T-cell (primary cell): ENCODE measurements at regions of chr17 and their contacts with region 1.

Region 1: DNA sequence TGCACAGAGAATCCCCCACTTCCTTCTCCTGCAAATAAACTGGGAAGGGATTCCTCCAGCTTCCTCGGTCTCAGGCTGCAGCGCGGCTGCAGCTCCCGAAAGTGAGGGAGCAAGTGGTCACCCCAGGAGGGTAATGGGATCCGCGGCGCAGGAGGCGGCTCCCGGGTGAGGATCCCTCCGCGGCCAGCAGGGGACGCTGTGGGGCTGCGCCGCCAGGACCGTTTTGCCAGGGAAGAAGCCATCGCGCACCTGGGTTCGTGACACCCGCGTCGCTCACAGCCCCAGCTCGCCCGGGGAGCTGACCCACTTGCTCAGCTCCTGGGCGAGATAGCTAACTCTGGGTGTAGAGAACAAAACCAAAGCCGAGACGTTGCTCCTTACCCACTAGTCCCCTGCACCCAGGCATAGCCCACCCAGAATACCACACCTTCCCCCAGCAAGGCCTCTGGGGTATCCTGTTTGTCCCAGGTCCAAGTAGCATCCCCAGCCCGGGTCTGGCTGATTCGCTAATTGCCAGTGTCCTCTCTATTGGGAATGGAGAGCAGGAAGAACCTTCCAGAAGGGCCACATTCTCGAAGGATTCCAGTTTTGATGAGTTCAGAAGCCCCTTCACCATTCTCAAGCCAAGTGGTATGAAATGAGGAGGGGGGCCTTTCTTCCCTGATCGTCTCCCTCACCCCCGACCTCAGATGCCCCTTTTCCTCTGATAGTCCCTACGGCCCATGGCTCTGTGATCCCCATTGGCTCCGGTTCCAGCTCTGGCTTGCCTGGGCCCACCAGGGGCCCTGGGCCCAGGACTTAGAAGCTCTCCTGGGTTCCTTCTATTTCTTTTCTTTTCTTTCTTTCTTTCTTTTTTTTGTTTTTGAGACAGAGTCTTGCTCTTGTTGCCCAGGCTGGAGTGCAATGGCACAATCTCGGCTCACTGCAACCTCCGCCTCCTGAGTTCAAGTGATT is 14.1 kb downstream of the CYGB start:
- DNase-seq: peak; percentile 44 to 92 (median 77)
- ATAC-seq: peak; percentile 74 to 85 (median 82)
- H3K4me3 ChIP-seq: no peak overlapping the region
- H3K4me3 Mint-ChIP-seq: peak overlapping the region; percentile 36 to 59 (median 43)
- H3K27ac ChIP-seq: no peak overlapping the region
- H3K27ac Mint-ChIP-seq: peak overlapping the region; percentile 87 to 88
- H3K4me1 ChIP-seq: peaks cover 2 to 38% of the 10 kb centered on the region in 2 experiments
- H3K4me1 Mint-ChIP-seq: peaks cover 22 to 44% (median 35%) of the 10 kb centered on the region in 3 donors
- H3K27me3 ChIP-seq: peaks cover 0 to 12% of the 10 kb centered on the region in 2 experiments
- H3K27me3 Mint-ChIP-seq: no peaks in the 10 kb centered on the region

Region 2: DNA sequence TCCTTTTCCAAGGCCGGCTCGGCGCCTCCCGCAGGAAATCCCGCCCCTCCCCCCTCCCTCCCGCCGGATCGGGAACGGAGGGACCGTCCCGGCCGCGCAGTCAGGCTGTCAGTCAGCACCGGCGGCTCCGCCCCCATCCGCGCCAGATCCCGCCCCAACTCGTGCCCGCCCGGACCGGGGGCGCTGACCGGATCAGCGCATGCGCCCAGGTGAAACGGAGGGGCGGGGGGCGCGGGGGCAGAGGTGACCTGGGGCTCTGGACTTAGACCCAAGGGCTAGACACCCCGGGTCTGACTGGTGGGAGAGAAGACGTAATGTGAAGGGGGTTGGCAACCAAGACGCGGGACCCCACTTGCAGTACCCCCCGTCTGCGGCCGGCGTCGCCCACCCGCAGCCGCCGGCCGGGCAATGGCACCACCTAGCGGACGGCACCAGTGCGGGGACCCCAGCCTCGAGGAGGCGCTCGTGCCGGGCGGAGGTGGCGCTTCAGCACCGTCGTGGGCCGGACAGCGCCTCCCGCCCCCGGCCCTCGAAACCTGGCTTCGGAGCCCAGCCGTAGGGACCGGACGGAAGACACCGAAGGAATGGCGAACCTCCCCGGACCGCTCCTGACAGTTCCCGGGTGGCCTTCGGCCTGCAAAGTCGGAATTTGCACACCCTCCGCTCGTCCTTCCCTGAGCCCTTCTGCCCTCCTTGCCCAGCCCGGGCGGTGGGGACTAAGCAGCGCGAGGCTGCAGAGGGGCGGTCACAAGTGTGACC is 1007.7 kb before region 1 on chr17 and contains the start of gene CASKIN2:
- CTCF ChIA-PET with region 1: no interaction called
- POLR2A ChIA-PET with region 1: interaction called in 1 of 2 experiments, 11 read pairs
- DNase-seq: peak; percentile 36 to 87 (median 66)
- ATAC-seq: peak; percentile 51 to 68 (median 60)
- H3K4me3 ChIP-seq: peak within 1 kb of the TSS; percentile 53 to 55
- H3K4me3 Mint-ChIP-seq: peak within 1 kb of the TSS; percentile 71 to 77 (median 75)
- H3K27ac ChIP-seq: no peak within 1 kb of the TSS
- H3K27ac Mint-ChIP-seq: peak within 1 kb of the TSS in 1 of 2 donors; percentile 15
- H3K4me1 ChIP-seq: peaks cover 21 to 47% of the 10 kb centered on the region in 2 experiments
- H3K4me1 Mint-ChIP-seq: peaks cover 21 to 28% (median 24%) of the 10 kb centered on the region in 3 donors
- H3K27me3 ChIP-seq: peaks cover 0 to 21% of the 10 kb centered on the region in 2 experiments
- H3K27me3 Mint-ChIP-seq: no peaks in the 10 kb centered on the region
- total RNA-seq, gene CASKIN2: 0.28 to 0.88 (median 0.85) TPM

Region 3: GRCh38 chr17:76252040-76252954 is 271.1 kb before region 1 on chr17:
- CTCF ChIA-PET with region 1: no interaction called
- POLR2A ChIA-PET with region 1: no interaction called
- DNase-seq: peak in 7 of 35 experiments; percentile 18 to 63 (median 46)
- ATAC-seq: peak; percentile 72 to 93 (median 90)
- H3K4me3 ChIP-seq: peak overlapping the region; percentile 18 to 29
- H3K4me3 Mint-ChIP-seq: peak overlapping the region; percentile 65 to 75 (median 71)
- H3K27ac ChIP-seq: peak overlapping the region; percentile 68
- H3K27ac Mint-ChIP-seq: peak overlapping the region; percentile 95 to 97
- H3K4me1 ChIP-seq: peaks cover 33 to 51% of the 10 kb centered on the region in 2 experiments
- H3K4me1 Mint-ChIP-seq: peaks cover 62 to 66% (median 63%) of the 10 kb centered on the region in 3 donors
- H3K27me3 ChIP-seq: no peaks in the 10 kb centered on the region
- H3K27me3 Mint-ChIP-seq: no peaks in the 10 kb centered on the region

Region 4: GRCh38 chr17:76492989-76493501 is 30.3 kb before region 1 on chr17:
- CTCF ChIA-PET with region 1: no interaction called
- POLR2A ChIA-PET with region 1: no interaction called
- DNase-seq: peak in 15 of 35 experiments; percentile 14 to 61 (median 25)
- ATAC-seq: peak; percentile 45 to 56 (median 51)
- H3K4me3 ChIP-seq: peak overlapping the region; percentile 10 to 33
- H3K4me3 Mint-ChIP-seq: peak overlapping the region; percentile 63 to 83 (median 83)
- H3K27ac ChIP-seq: peak overlapping the region; percentile 66
- H3K27ac Mint-ChIP-seq: peak overlapping the region; percentile 82 to 91
- H3K4me1 ChIP-seq: peaks cover 11 to 85% of the 10 kb centered on the region in 2 experiments
- H3K4me1 Mint-ChIP-seq: peaks cover 34 to 74% (median 52%) of the 10 kb centered on the region in 3 donors
- H3K27me3 ChIP-seq: no peaks in the 10 kb centered on the region
- H3K27me3 Mint-ChIP-seq: no peaks in the 10 kb centered on the region

Region 5: GRCh38 chr17:76547184-76547641 is 23.9 kb after region 1 on chr17:
- CTCF ChIA-PET with region 1: interaction called, 3 to 13 read pairs
- POLR2A ChIA-PET with region 1: no interaction called
- DNase-seq: peak in 34 of 35 experiments; percentile 11 to 79 (median 54)
- ATAC-seq: peak; percentile 80 to 94 (median 87)
- H3K4me3 ChIP-seq: no peak overlapping the region
- H3K4me3 Mint-ChIP-seq: no peak overlapping the region
- H3K27ac ChIP-seq: no peak overlapping the region
- H3K27ac Mint-ChIP-seq: no peak overlapping the region
- H3K4me1 ChIP-seq: peaks cover 0 to 7% of the 10 kb centered on the region in 2 experiments
- H3K4me1 Mint-ChIP-seq: peaks cover 0 to 4% (median 0%) of the 10 kb centered on the region in 3 donors
- H3K27me3 ChIP-seq: peaks cover 0 to 37% of the 10 kb centered on the region in 2 experiments
- H3K27me3 Mint-ChIP-seq: peaks cover 6 to 17% of the 10 kb centered on the region in 2 donors

Region 6: GRCh38 chr17:76623271-76624146 is 100.1 kb after region 1 on chr17:
- CTCF ChIA-PET with region 1: interaction called, 3 to 10 read pairs
- POLR2A ChIA-PET with region 1: interaction called in 1 of 2 experiments, 4 read pairs
- DNase-seq: peak; percentile 41 to 87 (median 69)
- ATAC-seq: peak; percentile 87 to 94 (median 93)
- H3K4me3 ChIP-seq: no peak overlapping the region
- H3K4me3 Mint-ChIP-seq: no peak overlapping the region
- H3K27ac ChIP-seq: no peak overlapping the region
- H3K27ac Mint-ChIP-seq: no peak overlapping the region
- H3K4me1 ChIP-seq: peaks cover 0 to 3% of the 10 kb centered on the region in 2 experiments
- H3K4me1 Mint-ChIP-seq: peaks cover 5 to 7% (median 5%) of the 10 kb centered on the region in 3 donors
- H3K27me3 ChIP-seq: peaks cover 0 to 8% of the 10 kb centered on the region in 2 experiments
- H3K27me3 Mint-ChIP-seq: peaks cover 0 to 4% of the 10 kb centered on the region in 2 donors